Activated CD4-positive, alpha-beta T cell treated with anti-CD3 and anti-CD28 coated beads, Interleukin-2, amount 10 ng/mL, durations not matched to agents 24 days and 14 days (primary cell): ENCODE measurements at regions of chr4 and their contacts with region 1.

Region 1: GRCh38 chr4:18593445-18594002 is 572.0 kb upstream of the LCORL start:
- DNase-seq: peak; percentile 84
- H3K4me3 Mint-ChIP-seq: peak overlapping the region; percentile 26
- H3K27ac Mint-ChIP-seq: no peak overlapping the region
- H3K4me1 Mint-ChIP-seq: peaks cover 5% of the 10 kb centered on the region
- H3K27me3 Mint-ChIP-seq: peaks cover 2% of the 10 kb centered on the region

Region 2: DNA sequence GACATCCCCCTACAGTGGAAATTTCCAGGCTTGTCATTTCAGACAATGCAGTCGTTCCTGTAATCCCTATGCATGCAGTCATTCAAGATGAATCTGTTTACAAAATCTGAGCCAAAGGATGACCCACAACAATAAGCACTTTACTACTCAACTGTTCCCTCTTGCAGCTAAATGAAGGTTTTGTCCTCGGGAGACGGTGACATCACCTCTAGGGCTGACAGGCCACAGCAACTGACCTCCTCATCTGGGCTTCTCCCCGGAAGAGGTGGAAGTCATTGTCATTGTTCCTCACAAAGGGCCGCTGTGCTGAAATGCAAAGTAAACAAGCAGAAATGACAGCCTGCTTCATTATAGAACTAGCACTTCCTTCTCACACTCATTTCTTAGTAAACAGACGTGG is 1049.3 kb before region 1 on chr4:
- intact Hi-C with region 1: loop called (anchors 1 kb)
- DNase-seq: no peak
- H3K4me3 Mint-ChIP-seq: no peak overlapping the region
- H3K27ac Mint-ChIP-seq: no peak overlapping the region
- H3K4me1 Mint-ChIP-seq: peaks cover 3% of the 10 kb centered on the region
- H3K27me3 Mint-ChIP-seq: peaks cover 12% of the 10 kb centered on the region

Region 3: DNA sequence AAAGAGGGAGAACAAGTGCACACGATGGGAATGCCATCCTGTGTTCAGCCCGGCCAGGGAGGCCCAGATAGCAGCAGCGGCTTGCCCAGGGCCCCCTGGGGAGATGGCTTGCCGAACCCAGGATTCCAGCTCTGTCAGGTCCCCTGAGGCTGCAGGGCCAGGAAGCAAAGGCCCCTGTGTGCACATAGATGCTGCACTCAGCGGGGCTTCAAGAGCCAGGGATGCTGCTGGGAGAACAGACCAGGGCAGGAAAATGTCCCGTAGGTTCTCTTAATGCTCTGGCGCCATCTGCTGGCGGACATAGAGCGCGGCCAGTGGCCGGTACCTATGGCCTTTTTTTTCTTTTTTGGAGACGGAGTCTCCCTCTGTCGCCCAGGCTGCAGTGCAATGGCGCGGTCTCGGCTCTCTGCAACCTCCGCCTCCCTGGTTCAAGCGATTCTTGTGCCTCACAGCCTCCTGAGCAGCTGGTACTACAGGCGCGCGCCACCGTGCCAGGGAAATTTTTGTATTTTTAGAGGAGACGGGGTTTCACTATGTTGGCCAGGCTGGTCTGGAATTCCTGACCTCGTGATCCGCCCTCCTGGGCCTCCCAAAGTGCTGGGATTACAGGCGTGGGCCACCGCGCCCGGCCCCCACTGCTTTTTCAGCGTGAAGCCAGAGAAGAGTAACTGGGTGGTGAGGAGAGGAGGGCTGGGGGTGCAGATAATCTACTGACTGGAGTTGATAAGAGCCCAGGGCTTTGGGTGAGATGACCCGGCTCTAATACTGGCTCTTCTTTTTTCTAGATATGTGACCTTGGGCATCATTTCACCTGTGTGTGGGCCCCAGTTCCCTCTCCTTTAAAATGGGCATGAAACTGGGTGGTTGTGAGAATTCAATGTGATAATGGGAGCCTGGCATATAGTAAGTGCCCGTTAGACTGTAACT is 956.6 kb before region 1 on chr4:
- intact Hi-C with region 1: loop called (anchors 2 kb)
- DNase-seq: peak; percentile 91
- H3K4me3 Mint-ChIP-seq: no peak overlapping the region
- H3K27ac Mint-ChIP-seq: no peak overlapping the region
- H3K4me1 Mint-ChIP-seq: no peaks in the 10 kb centered on the region
- H3K27me3 Mint-ChIP-seq: no peaks in the 10 kb centered on the region

Region 4: GRCh38 chr4:17817020-17817419 is 776.5 kb before region 1 on chr4:
- intact Hi-C with region 1: loop called (anchors 1 kb)
- DNase-seq: peak; percentile 70
- H3K4me3 Mint-ChIP-seq: peak overlapping the region; percentile 73
- H3K27ac Mint-ChIP-seq: peak overlapping the region; percentile 62
- H3K4me1 Mint-ChIP-seq: peaks cover 46% of the 10 kb centered on the region
- H3K27me3 Mint-ChIP-seq: no peaks in the 10 kb centered on the region

Region 5: GRCh38 chr4:17934286-17934685 is 659.2 kb before region 1 on chr4:
- intact Hi-C with region 1: loop called (anchors 10 kb)
- DNase-seq: no peak
- H3K4me3 Mint-ChIP-seq: no peak overlapping the region
- H3K27ac Mint-ChIP-seq: no peak overlapping the region
- H3K4me1 Mint-ChIP-seq: no peaks in the 10 kb centered on the region
- H3K27me3 Mint-ChIP-seq: no peaks in the 10 kb centered on the region

Region 6: DNA sequence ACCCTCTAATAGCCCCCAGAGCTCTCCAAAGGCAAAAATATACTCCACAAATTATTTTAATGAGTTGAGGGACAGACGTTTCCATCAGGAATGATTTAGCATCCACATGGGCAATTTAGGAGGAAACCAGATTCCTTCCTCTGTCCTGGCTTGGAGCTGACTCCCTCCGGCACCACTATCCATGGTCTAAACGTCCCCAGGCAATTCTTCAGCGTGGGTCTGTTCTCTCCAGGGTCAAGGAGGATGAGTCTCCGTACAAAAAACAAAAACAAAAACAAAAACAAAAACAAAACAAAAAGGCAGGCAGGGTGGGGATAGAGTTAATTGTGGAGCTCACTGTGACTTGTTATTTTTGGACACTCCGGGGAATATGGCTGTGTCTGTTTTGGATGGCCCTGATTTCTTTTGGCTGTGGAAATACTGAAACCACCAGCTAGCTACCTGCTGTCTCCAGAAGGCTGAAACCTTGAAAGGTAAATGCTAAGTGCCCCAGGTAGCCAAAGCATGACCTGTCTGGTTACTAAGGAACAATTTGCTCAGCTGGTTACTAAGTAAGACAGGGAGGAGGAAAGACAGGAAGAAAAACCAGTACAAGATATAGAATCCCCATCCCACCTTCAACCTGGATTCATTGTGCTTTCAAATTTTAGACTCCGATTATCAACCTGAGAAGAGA is 152.9 kb before region 1 on chr4:
- intact Hi-C with region 1: no loop called
- DNase-seq: no peak
- H3K4me3 Mint-ChIP-seq: no peak overlapping the region
- H3K27ac Mint-ChIP-seq: no peak overlapping the region
- H3K4me1 Mint-ChIP-seq: no peaks in the 10 kb centered on the region
- H3K27me3 Mint-ChIP-seq: no peaks in the 10 kb centered on the region

Region 7: GRCh38 chr4:18463987-18464559 is 129.5 kb before region 1 on chr4:
- intact Hi-C with region 1: no loop called
- DNase-seq: no peak
- H3K4me3 Mint-ChIP-seq: no peak overlapping the region
- H3K27ac Mint-ChIP-seq: no peak overlapping the region
- H3K4me1 Mint-ChIP-seq: no peaks in the 10 kb centered on the region
- H3K27me3 Mint-ChIP-seq: no peaks in the 10 kb centered on the region